SK-N-SH (cell line): ENCODE measurements at regions of chr6 and their contacts with region 1.

Region 1: DNA sequence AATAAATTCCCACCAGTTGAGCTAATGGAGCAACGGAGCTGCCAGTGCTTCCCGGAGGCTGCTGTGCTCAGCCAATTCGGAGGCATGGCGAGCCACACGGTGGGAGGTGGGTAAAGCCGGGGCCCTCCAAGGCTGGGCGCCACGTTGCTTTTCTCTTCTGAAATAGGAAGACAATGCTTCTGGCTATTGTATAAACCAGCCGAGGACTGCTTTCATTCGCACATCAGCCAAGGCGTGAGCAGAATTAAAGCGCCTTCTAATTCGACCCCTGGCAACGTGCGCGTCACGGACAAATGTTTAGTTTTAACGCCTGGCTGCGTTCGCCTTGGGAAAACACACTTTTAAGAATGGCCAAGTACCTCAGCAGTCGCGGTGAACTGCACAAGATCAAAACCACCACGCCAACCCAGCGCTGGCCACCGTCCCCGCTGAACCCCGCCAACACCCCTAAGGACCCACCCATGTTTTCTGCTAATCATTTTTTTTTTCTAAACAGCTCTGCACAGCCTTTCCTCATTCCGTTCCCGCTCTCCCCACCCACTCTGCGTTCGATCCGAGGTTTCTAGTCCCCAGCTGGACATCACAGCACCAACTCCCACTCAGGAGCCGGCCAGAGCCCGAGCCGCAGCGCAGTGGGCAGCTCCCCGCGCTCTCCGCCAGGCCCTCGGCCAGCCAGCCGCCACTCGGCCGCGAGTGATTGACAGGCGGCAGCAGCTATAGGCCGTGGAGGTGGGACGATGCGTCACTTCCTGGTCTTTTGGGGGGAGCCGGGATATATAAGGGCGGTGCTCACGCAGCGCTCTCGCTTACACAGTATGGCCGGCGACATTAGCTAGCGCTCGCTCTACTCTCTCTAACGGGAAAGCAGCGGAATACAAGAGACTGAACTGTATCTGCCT is at the start of gene AMD1:
- DNase-seq: peak; percentile 97
- H3K4me3 ChIP-seq: peak within 1 kb of the TSS; percentile 93
- H3K27ac ChIP-seq: peak within 1 kb of the TSS; percentile 91 to 92
- H3K4me1 ChIP-seq: peaks cover 14 to 28% of the 10 kb centered on the region in 2 experiments; a peak in 3 of 4 replicates
- H3K27me3 ChIP-seq: no peaks in the 10 kb centered on the region
- CTCF ChIP-seq: no peak
- EP300 ChIP-seq: no peak
- RAD21 ChIP-seq: no peak
- polyA plus RNA-seq, gene AMD1: 21.1 and 27.1 TPM in 2 replicates

Region 2: GRCh38 chr6:110528101-110528929 is 345.9 kb before region 1 on chr6:
- CTCF ChIA-PET with region 1: interaction called, 16 read pairs
- POLR2A ChIA-PET with region 1: interaction called, 5 read pairs
- DNase-seq: peak; percentile 59
- H3K4me3 ChIP-seq: peak overlapping the region in 1 of 2 experiments; percentile 42; a peak in 1 of 4 replicates
- H3K27ac ChIP-seq: peak overlapping the region; percentile 47 to 91; a peak in 3 of 4 replicates
- H3K4me1 ChIP-seq: peaks cover 0 to 18% of the 10 kb centered on the region in 2 experiments; a peak in 2 of 4 replicates
- H3K27me3 ChIP-seq: no peaks in the 10 kb centered on the region
- CTCF ChIP-seq: peak; percentile 93
- EP300 ChIP-seq: peak; percentile 8 to 90; a peak in 3 of 4 replicates
- RAD21 ChIP-seq: peak; percentile 93

Region 3: GRCh38 chr6:110543106-110543505 is 331.1 kb before region 1 on chr6:
- CTCF ChIA-PET with region 1: interaction called, 4 read pairs
- POLR2A ChIA-PET with region 1: interaction called, 14 read pairs
- DNase-seq: peak; percentile 52
- H3K4me3 ChIP-seq: no peak overlapping the region
- H3K27ac ChIP-seq: peak overlapping the region in 1 of 2 experiments; percentile 81; a peak in 3 of 4 replicates
- H3K4me1 ChIP-seq: peaks cover 24 to 25% of the 10 kb centered on the region in 2 experiments
- H3K27me3 ChIP-seq: no peaks in the 10 kb centered on the region
- CTCF ChIP-seq: no peak
- EP300 ChIP-seq: no peak
- RAD21 ChIP-seq: no peak

Region 4: GRCh38 chr6:110714143-110714542 is 160.1 kb before region 1 on chr6:
- CTCF ChIA-PET with region 1: no interaction called
- POLR2A ChIA-PET with region 1: no interaction called
- DNase-seq: no peak
- H3K4me3 ChIP-seq: no peak overlapping the region
- H3K27ac ChIP-seq: no peak overlapping the region
- H3K4me1 ChIP-seq: no peaks in the 10 kb centered on the region
- H3K27me3 ChIP-seq: no peaks in the 10 kb centered on the region
- CTCF ChIP-seq: no peak
- EP300 ChIP-seq: no peak
- RAD21 ChIP-seq: no peak

Region 5: GRCh38 chr6:110815217-110816109 is 58.8 kb before region 1 on chr6 and contains the start of gene CDK19:
- CTCF ChIA-PET with region 1: interaction called, 8 read pairs
- POLR2A ChIA-PET with region 1: interaction called, 91 read pairs
- DNase-seq: peak; percentile 93
- H3K4me3 ChIP-seq: peak within 1 kb of the TSS; percentile 79 to 95
- H3K27ac ChIP-seq: peak within 1 kb of the TSS; percentile 97 to 99
- H3K4me1 ChIP-seq: peaks cover 0 to 6% of the 10 kb centered on the region in 2 experiments; a peak in 3 of 4 replicates
- H3K27me3 ChIP-seq: no peaks in the 10 kb centered on the region
- CTCF ChIP-seq: no peak
- EP300 ChIP-seq: no peak
- RAD21 ChIP-seq: no peak
- polyA plus RNA-seq, gene CDK19: 6.5 and 9.1 TPM in 2 replicates

Region 6: GRCh38 chr6:110890288-110890687 is 16.1 kb after region 1 on chr6:
- CTCF ChIA-PET with region 1: interaction called, 12 read pairs
- POLR2A ChIA-PET with region 1: interaction called, 11 read pairs
- DNase-seq: no peak
- H3K4me3 ChIP-seq: no peak overlapping the region
- H3K27ac ChIP-seq: no peak overlapping the region
- H3K4me1 ChIP-seq: no peaks in the 10 kb centered on the region
- H3K27me3 ChIP-seq: no peaks in the 10 kb centered on the region
- CTCF ChIP-seq: no peak
- EP300 ChIP-seq: no peak
- RAD21 ChIP-seq: no peak

Region 7: DNA sequence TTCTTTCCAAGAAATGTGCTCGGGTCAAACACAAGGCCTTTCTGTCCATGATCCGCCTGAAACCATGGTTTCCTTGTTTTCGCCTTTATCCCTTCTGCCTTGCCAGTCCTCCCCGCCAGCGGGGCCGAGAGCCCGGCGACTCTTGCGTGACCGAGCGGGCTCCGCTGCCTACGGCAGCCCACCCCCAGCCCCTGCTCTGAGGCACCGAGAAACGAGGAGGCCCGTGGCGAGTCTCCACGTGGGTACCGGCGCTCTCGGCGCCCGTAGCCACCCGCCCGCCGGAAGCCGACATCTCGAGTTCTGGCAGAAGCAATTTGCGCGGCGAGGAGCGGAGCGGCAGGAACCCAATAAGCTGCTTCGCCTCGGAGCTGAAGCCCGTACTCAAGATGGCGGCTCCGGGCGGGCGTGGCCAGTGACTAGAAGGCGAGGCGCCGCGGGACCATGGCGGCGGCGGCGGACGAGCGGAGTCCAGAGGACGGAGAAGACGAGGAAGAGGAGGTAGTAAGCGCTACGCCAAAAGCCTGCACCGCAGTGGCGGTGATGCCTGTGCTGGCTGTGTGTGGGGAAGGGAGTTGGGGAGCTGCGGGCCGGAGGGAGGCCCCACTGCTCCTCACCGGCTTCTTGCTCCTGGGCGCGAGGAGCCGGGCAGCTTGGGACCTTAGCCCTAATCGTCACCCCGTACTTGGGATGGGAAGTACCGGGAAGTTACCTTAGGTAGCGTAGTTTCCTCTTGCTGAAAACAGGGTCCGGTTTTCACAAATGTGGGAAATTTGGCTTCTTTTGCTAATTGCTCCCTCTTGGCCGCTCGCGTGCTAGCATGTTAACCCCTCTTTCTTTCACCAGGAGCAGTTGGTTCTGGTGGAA is 84.3 kb after region 1 on chr6 and contains the start of gene GTF3C6:
- CTCF ChIA-PET with region 1: interaction called, 3 read pairs
- POLR2A ChIA-PET with region 1: interaction called, 18 read pairs
- DNase-seq: peak; percentile 91
- H3K4me3 ChIP-seq: peak within 1 kb of the TSS; percentile 63 to 74
- H3K27ac ChIP-seq: peak within 1 kb of the TSS; percentile 88 to 90
- H3K4me1 ChIP-seq: peaks cover 0 to 6% of the 10 kb centered on the region in 2 experiments; a peak in 1 of 4 replicates
- H3K27me3 ChIP-seq: no peaks in the 10 kb centered on the region
- CTCF ChIP-seq: no peak
- EP300 ChIP-seq: 0 out of 4 replicates have a peak, but pooled peaks of 1 of the 2 experiments have one; percentile 24
- RAD21 ChIP-seq: no peak
- polyA plus RNA-seq, gene GTF3C6: 28.4 and 38.5 TPM in 2 replicates

Region 8: GRCh38 chr6:110981202-110981600 is 107.0 kb after region 1 on chr6:
- CTCF ChIA-PET with region 1: no interaction called
- POLR2A ChIA-PET with region 1: interaction called, 18 read pairs
- DNase-seq: no peak
- H3K4me3 ChIP-seq: peak overlapping the region; percentile 82 to 91
- H3K27ac ChIP-seq: peak overlapping the region; percentile 9 to 86; a peak in 3 of 4 replicates
- H3K4me1 ChIP-seq: peaks cover 0 to 4% of the 10 kb centered on the region in 2 experiments; a peak in 1 of 4 replicates
- H3K27me3 ChIP-seq: no peaks in the 10 kb centered on the region
- CTCF ChIP-seq: no peak
- EP300 ChIP-seq: no peak
- RAD21 ChIP-seq: no peak